ENCODE measurements at regions of chr10 and their contacts with region 1.

Region 1: DNA sequence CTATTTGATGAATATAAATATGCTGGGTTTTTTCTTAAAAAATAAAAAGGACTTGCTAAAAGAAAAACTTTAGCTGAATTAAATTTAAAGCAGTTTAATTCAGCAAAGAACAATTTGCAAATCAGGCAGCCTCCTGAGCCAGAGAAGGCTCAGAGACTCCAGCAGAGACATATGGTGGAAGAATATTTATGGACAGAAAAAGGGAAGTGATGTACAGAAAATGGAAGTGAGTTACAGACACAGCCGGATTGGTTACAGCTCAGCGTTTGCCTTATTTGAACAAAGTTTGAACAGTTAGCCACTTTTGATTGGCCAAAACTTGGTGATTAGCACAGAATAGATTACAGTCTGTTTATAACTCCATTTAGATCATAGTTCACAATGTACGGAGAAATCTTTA is 110.3 kb downstream of the GAD2 start:
- DNase-seq: no peak

Region 2: DNA sequence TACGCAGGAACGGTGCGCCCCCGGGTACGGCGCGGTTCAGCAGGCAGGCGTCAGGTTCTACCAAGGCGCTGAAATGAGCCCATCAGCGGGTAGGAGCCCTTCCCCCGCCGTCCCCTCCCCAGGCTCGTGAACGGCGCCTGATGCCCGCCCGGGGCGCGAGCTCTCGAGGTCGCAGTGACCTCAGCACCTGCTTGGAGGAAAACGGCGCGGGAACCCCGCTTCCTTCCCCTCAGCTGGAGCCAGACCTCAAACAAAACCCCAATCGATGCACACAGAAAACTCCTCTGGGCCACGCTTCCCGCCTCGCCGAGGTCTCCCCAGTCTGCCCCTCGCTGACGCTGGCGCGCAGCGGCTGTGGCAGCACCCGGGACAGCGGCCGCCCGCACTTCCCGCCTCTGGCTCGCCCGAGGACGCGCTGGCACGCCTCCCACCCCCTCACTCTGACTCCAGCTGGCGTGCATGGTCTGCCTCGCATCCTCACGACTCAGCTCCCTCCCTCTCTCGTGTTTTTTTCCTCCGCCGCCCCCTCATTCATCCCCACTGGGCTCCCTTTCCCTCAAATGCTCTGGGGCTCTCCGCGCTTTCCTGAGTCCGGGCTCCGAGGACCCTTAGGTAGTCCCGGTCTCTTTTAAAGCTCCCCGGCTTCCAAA is 110.8 kb before region 1 on chr10:
- CTCF ChIA-PET with region 1: no interaction called
- POLR2A ChIA-PET with region 1: no interaction called
- DNase-seq: peak; percentile 63

Region 3: DNA sequence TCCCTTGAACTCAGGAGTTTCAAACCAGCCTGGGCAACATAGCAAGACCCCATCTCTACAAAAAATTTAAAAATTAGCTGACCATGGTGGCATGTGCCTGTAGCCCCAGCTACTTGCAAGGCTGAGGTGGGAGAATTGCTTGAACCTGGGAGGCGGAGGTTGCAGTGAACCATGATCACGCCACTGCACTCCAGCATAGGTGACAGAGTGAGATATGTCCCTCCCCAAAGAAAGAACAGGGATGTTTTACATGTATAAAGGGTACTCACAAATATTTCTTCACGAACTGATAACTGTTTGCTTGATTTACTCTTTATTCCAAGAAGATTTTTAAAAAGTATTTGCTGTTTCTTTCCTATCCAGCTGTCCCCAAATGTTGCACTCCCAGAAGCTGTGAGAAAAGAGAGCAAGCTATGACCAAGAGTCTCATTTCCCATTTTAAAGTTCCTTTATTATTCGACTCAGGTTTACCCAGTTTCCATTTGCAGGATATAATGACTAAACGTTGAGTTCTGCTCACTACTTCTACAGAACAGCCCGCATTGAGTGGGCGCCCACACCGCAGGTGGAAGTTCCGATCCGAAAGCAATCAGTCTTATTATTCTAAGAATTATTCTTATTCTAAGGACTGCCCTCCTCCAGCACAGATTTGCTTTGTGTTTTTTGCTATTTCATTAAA is 202.0 kb after region 1 on chr10:
- CTCF ChIA-PET with region 1: interaction called, 12 read pairs
- POLR2A ChIA-PET with region 1: no interaction called
- DNase-seq: no peak